CD8-positive, alpha-beta memory T cell (primary cell): ENCODE measurements at regions of chr14 and their contacts with region 1.

Region 1: GRCh38 chr14:100955201-100955600 is 51.7 kb upstream of the RTL1 start:
- DNase-seq: no peak
- H3K4me3 ChIP-seq: no peak overlapping the region
- H3K4me3 Mint-ChIP-seq: no peak overlapping the region
- H3K27ac ChIP-seq: no peak overlapping the region
- H3K27ac Mint-ChIP-seq: no peak overlapping the region
- H3K4me1 ChIP-seq: no peaks in the 10 kb centered on the region
- H3K4me1 Mint-ChIP-seq: no peaks in the 10 kb centered on the region
- H3K27me3 ChIP-seq: no peaks in the 10 kb centered on the region
- H3K27me3 Mint-ChIP-seq: peaks cover 3 to 38% of the 10 kb centered on the region in 2 donors

Region 2: GRCh38 chr14:100915560-100915959 is 39.6 kb before region 1 on chr14:
- CTCF ChIA-PET with region 1: no interaction called
- POLR2A ChIA-PET with region 1: interaction called, 10 read pairs
- DNase-seq: no peak
- H3K4me3 ChIP-seq: no peak overlapping the region
- H3K4me3 Mint-ChIP-seq: peak overlapping the region in 1 of 7 donors; percentile 42
- H3K27ac ChIP-seq: no peak overlapping the region
- H3K27ac Mint-ChIP-seq: peak overlapping the region in 1 of 8 donors; percentile 39
- H3K4me1 ChIP-seq: no peaks in the 10 kb centered on the region
- H3K4me1 Mint-ChIP-seq: no peaks in the 10 kb centered on the region
- H3K27me3 ChIP-seq: no peaks in the 10 kb centered on the region
- H3K27me3 Mint-ChIP-seq: peaks cover 11 to 23% of the 10 kb centered on the region in 2 donors

Region 3: DNA sequence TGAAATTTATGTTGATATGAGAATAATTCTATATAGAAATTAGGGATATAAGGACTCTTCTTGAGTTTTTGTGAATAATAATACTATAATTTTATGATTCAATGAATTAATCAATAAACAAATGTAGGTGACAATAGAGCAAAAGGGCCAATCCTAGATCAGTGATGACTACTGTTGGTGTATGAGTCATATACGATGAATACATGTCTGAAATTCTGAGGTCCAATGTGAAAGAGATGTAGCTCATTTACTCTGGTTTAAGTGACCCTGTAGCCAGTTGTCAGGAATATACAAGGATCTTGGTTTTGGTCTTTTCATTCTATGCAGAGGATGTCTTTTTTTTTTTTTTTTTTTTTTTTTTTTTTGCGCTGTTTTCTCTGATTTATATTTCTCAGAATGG is 20.5 kb after region 1 on chr14:
- CTCF ChIA-PET with region 1: no interaction called
- POLR2A ChIA-PET with region 1: no interaction called
- DNase-seq: no peak
- H3K4me3 ChIP-seq: no peak overlapping the region
- H3K4me3 Mint-ChIP-seq: no peak overlapping the region
- H3K27ac ChIP-seq: no peak overlapping the region
- H3K27ac Mint-ChIP-seq: no peak overlapping the region
- H3K4me1 ChIP-seq: no peaks in the 10 kb centered on the region
- H3K4me1 Mint-ChIP-seq: no peaks in the 10 kb centered on the region
- H3K27me3 ChIP-seq: no peaks in the 10 kb centered on the region
- H3K27me3 Mint-ChIP-seq: peaks cover 12 to 13% of the 10 kb centered on the region in 2 donors